Right cardiac atrium (tissue), 5 donors: ENCODE measurements at regions of chr17 and their contacts with region 1.

Region 1: DNA sequence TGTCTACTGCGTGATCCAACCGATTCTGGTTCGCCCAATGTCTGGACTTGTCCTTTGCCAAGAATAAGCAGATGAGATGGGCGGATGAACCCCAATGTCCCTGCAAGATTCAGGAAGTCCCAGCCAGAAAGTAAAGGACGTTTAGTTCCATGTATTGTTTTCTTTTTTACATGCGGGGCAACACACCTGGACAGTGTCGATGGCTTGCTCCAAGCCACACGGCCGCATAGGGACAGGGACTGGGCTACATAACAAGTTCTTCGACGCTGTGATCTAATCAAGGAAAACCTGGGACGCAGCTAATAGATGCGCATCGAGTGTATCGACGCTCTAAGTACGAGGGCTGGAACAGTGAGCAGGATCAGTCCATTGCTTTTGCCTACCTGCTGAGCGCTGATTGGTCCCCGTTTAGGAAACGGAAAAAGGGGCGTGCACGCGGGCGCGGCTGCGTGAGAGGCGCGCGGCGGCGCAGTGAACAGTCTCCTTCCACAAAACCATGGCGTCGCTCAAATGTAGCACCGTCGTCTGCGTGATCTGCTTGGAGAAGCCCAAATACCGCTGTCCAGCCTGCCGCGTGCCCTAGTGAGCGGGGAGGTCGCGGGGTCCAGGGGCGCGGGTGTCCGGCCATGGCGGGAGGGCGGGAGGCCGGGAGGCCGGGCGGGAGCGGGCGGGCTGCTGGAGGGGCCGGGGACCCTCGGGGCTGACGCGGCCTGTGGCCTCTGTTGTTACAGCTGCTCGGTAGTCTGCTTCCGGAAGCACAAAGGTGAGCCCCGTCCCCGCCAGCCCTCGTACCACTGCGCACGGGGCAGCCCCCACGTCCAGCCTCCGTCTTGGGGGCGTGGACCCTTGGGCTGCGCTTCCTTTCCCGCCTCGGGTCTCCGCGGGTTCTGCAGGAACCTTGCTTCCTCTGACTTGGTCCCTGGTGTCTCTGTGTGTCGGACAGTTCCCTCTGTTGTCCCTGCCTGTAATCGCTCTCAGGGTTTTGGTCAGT is at the start of gene ZNHIT3:
- DNase-seq: peak; percentile 91 to 97 (median 95)
- ATAC-seq: peak; percentile 94 to 95
- H3K4me3 ChIP-seq: peak within 1 kb of the TSS; percentile 88
- H3K27ac ChIP-seq: peak within 1 kb of the TSS; percentile 44
- H3K4me1 ChIP-seq: peaks cover 3% of the 10 kb centered on the region
- H3K27me3 ChIP-seq: no peaks in the 10 kb centered on the region
- total RNA-seq, gene ZNHIT3: 17.7 to 24.0 (median 23.6) TPM

Region 2: GRCh38 chr17:36948717-36949460 is 462.4 kb after region 1 on chr17 and contains the start of gene AATF:
- intact Hi-C with region 1: loop called in 1 of 4 experiments (anchors 5 kb)
- DNase-seq: peak; percentile 96 to 99 (median 99)
- ATAC-seq: peak; percentile 100
- H3K4me3 ChIP-seq: peak within 1 kb of the TSS; percentile 70
- H3K27ac ChIP-seq: peak within 1 kb of the TSS; percentile 71
- H3K4me1 ChIP-seq: no peaks in the 10 kb centered on the region
- H3K27me3 ChIP-seq: no peaks in the 10 kb centered on the region
- total RNA-seq, gene AATF: 22.2 to 32.9 (median 24.5) TPM